ENCODE measurements at regions of chr2 and their contacts with region 1.

Region 1: GRCh38 chr2:71282495-71282894 is 49.1 kb upstream of the ZNF638 start:
- DNase-seq: peak; percentile 34
- H3K4me3 Mint-ChIP-seq: no peak overlapping the region
- H3K27ac Mint-ChIP-seq: no peak overlapping the region
- H3K4me1 Mint-ChIP-seq: peaks cover 10% of the 10 kb centered on the region
- H3K27me3 Mint-ChIP-seq: no peaks in the 10 kb centered on the region
- CTCF ChIP-seq: peak; percentile 26

Region 2: DNA sequence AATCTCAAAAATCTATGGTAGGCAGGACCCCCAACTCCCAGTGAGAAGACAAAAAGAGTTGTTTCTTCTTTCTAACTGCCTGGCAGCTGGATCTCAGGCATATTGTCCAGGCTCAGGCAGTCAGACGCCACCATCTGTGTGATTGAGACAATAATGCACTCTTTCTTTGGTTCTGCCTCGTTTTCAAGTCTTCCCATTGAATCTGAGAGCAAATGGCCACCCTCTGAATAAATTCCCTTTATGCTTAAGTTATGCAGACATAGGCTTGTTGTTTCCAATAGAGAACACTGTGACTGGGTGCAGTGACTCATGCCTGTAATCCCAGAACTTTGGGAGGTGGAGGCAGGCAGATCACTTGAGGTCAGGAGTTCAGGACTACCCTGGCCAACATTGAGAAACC is 431.6 kb before region 1 on chr2:
- CTCF ChIA-PET with region 1: no interaction called
- POLR2A ChIA-PET with region 1: no interaction called
- intact Hi-C with region 1: no loop called
- DNase-seq: peak; percentile 7
- H3K4me3 Mint-ChIP-seq: no peak overlapping the region
- H3K27ac Mint-ChIP-seq: no peak overlapping the region
- H3K4me1 Mint-ChIP-seq: peaks cover 6% of the 10 kb centered on the region
- H3K27me3 Mint-ChIP-seq: peaks cover 31% of the 10 kb centered on the region
- CTCF ChIP-seq: no peak

Region 3: DNA sequence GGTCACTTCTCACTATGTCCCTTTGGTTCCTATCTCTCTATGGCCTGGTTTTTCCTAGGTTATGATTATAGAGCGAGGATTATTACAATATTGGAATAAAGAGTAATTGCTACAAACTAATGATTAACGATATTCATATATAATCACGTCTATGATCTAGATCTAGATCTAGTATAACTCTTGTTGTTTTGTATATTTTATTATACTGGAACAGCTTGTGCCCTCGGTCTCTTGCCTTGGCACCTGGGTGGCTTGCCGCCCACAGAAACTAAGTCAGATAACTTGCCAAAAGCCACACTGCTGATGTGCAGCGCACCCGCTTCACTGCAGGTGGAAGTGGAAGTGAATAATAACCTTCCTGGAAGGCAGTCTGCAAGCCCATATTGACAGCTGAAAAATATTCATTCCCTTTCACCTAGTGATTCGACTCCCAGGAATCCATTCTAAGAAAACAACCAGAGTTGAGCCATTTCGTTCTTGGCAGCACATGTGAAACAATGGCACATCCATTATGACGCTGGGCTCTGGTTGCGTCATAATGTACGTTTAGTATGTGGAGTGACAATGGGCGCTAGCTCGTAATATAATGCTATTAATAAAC is 304.8 kb before region 1 on chr2:
- CTCF ChIA-PET with region 1: no interaction called
- POLR2A ChIA-PET with region 1: no interaction called
- intact Hi-C with region 1: no loop called
- DNase-seq: peak; percentile 81
- H3K4me3 Mint-ChIP-seq: peak overlapping the region; percentile 68
- H3K27ac Mint-ChIP-seq: peak overlapping the region; percentile 82
- H3K4me1 Mint-ChIP-seq: peaks cover 17% of the 10 kb centered on the region
- H3K27me3 Mint-ChIP-seq: peaks cover 25% of the 10 kb centered on the region
- CTCF ChIP-seq: no peak

Region 4: DNA sequence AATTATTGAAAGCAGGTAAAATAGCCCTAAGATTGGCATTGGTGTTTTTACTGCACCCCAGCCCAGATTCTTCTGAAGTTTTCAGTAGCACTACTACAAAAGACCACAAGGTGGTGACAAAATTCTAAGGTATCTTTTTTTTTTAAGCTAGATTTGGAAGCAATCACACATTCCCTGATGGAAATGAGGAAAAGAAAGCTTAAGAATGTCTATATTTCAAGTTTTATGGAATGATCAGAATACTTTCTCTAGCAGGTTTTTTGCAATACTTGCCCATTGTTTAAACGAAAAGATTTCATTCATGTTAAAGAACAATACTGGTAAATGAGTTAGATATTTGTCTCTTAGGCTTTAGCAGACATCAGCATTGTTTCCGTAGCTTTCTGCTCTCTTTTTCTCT is 17.0 kb after region 1 on chr2:
- CTCF ChIA-PET with region 1: interaction called, 15 read pairs
- POLR2A ChIA-PET with region 1: no interaction called
- intact Hi-C with region 1: no loop called
- DNase-seq: peak; percentile 51
- H3K4me3 Mint-ChIP-seq: no peak overlapping the region
- H3K27ac Mint-ChIP-seq: no peak overlapping the region
- H3K4me1 Mint-ChIP-seq: peaks cover 9% of the 10 kb centered on the region
- H3K27me3 Mint-ChIP-seq: no peaks in the 10 kb centered on the region
- CTCF ChIP-seq: peak; percentile 64